ENCODE measurements at regions of chr11 and their contacts with region 1.

Region 1: DNA sequence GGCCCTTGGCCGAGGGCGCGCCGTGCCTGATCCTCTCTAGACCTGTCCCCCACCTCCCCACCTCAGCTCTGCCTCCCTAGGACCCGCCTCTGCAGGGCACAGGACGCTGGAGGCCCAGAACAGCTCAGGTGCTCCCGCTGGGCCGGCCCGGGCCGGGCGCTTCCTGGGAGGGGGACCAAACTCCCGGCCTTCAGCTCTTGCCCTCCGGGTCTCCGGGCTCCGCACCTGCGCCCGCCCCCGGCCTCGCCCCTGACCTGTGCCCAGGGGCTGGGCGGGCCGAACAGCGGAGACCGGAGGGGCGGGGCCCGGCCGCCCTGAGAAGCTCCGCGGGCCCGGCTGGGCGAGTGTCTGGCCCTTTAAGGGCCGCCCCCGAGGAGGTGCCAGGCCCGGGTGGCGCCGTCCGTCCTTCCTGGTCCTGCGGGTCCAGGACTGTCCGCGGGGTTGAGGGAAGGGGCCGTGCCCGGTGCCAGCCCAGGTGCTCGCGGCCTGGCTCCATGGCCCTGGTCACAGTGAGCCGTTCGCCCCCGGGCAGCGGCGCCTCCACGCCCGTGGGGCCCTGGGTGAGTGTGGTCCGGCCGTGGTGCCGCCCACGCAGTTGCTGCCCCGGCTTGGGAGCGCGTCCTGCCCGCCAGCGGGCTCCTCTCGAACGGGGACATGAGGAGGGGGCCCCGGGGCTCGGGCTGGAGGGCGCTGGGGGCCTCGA is at the start of gene SSH3:
- DNase-seq: no peak
- H3K4me3 Mint-ChIP-seq: peak within 1 kb of the TSS; percentile 43
- H3K27ac Mint-ChIP-seq: no peak within 1 kb of the TSS
- H3K4me1 Mint-ChIP-seq: peaks cover 13% of the 10 kb centered on the region
- H3K27me3 Mint-ChIP-seq: no peaks in the 10 kb centered on the region
- total RNA-seq, gene SSH3: 8.2 to 9.6 TPM

Region 2: DNA sequence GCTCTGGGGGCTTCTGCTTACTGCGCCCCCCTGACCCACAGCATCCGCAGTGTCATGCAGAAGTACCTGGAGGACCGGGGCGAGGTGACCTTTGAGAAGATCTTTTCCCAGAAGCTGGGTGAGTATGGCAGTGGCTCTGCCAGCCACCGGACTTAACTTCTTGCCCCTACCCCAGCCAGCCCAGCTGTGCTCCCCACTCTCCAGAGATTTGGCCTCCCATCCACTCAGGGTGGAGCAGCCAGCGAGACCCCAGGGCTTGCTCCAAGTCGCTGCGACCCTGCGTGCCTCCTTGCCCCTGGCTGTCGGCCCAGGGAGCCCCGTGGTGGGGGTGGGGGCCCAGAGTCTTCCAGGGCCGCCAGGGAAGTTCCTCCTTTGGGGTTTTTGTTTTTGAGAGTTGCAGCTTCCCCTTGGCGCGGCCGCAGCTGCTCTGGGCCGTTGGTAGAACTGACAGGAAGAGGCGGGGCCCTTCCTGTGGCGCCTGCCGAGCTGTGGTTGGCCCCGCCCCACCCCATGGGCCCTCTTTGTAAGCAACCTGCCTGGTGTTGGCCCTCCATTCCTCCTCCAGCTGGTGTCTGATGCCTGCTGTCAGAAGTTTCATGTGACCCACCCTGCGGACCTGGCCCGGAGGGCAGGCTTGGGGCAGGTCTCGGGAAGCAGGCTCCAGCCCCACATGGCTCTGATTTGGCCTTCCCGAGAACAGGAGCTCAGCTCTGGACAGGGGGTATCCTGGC is 25.9 kb before region 1 on chr11:
- CTCF ChIA-PET with region 1: interaction called, 11 read pairs
- POLR2A ChIA-PET with region 1: interaction called, 5 read pairs
- DNase-seq: peak; percentile 95
- H3K4me3 Mint-ChIP-seq: peak overlapping the region; percentile 78
- H3K27ac Mint-ChIP-seq: peak overlapping the region; percentile 93
- H3K4me1 Mint-ChIP-seq: peaks cover 81% of the 10 kb centered on the region
- H3K27me3 Mint-ChIP-seq: no peaks in the 10 kb centered on the region

Measured in activated CD4-positive, alpha-beta T cell treated with anti-CD3 and anti-CD28 coated beads, Interleukin-2, amount 10 ng/mL, durations not matched to agents 7 days and 5 days (primary cell).